ENCODE measurements at regions of chr5 and their contacts with region 1.

Region 1: GRCh38 chr5:115634343-115635132 is 8.7 kb upstream of the TMED7 start:
- DNase-seq: peak; percentile 76 to 97 (median 92)

Region 2: GRCh38 chr5:115360046-115360685 is 274.4 kb before region 1 on chr5:
- intact Hi-C with region 1: no loop called
- DNase-seq: no peak

Region 3: DNA sequence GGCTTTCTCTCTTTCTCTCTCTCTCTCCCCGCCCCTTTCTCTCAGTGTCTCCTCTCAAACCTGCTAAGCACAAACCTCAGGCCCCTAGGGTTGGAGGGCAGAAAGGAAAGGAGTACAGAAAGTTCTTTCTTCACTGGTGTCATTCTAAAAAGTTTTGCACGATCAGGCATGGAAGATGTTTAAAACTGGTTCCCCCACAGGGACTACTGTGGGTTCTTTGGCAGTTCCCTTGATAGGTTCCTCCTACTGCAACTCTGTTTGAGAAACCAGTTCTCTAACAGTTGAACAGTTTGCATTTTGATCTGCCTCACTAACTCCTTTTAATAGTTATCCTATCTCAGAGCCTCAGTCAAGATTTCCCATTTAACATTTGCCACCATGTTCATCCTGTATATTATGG is 99.1 kb after region 1 on chr5:
- intact Hi-C with region 1: no loop called
- DNase-seq: no peak

Region 4: DNA sequence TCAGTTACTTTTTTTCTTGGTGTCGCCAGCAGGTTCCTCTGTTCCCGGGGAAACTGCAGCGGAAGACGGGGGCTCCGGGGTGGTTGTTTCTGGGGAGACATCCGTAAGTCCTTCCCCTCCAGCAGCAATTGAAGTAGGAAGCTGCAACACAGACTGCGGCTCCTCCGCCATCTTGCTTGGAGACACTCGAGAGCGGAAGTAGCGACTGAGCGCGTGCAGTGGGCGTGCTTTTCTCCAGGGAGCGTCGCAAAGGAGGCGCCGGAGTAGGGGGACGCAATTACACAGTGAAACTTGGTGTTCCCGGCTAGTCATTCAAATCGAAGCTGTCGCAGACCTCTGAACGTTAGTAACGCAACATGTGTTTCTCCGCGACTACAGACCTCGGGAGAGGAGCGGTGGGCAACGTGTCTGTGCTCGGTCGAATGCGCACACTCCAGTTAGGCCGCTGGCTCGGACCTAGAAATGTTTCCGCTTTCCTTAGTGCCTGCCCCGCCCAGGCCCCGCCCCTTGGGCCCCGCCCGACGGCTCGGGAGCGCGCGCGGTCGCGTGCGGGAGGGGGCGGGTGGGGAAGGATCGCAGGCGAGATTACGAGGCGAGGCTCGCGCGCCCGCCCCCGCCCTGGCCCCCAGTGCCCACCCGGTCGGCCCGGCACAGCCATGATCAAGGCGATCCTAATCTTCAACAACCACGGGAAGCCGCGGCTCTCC is 207.0 kb after region 1 on chr5 and contains the starts of genes AP3S1 and ATG12:
- intact Hi-C with region 1: loop called (anchors 1 kb)
- DNase-seq: peak; percentile 85 to 98 (median 91)

Region 5: DNA sequence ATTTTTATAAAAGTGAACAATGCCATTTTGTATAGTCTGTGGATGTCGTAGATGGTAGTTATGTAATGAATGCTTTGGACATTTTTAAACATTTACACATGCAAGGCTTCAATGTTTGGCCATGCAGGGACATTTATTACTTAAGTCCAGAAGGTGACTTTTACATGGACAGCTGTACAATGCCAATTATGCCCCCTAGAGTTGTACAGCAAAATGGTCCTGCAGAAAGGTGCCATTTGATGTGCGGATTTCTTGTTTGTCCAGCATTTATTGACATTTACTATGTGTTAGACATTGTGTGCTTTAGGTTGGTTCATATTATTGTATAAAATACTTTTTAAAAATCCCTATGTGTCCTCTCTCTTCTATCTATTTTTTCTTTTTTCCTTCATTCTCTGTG is 427.8 kb after region 1 on chr5:
- intact Hi-C with region 1: loop called (anchors 1 kb)
- DNase-seq: no peak

Region 6: DNA sequence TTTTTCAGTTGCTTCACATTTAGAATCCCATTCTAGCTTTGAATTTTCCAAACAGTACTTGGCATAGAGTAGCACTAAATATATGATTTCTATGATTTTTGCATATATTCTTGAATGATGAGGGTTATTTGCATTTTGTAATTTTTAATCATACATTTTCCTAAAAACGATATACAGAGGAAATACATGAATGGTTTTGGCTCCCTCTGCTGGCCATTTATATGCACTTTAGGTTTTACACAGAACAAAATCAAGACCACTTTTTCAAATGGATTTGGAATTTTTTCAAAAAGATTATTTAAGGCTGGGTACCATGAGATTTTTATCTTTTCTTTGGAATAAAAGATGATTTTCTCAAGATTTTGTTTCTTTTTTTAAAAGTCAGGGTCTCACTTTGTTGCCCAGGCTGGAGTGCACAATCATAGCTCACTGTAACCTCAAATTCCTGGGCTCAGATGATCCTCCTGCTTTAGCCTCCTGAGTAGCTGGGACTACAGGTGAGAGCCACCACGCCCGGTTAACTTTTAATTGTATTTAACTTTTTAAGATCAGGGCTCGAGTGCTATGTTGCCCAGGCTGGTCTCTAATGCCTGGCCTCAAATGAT is 433.6 kb after region 1 on chr5:
- intact Hi-C with region 1: loop called (anchors 1 kb)
- DNase-seq: peak in 1 of 10 donors; percentile 22

Measured in posterior cingulate gyrus (tissue), 11 donors.